ENCODE measurements at regions of chr13 and their contacts with region 1.

Region 1: GRCh38 chr13:24995226-24995804 is 100.6 kb upstream of the PABPC3 start:
- DNase-seq: peak; percentile 70
- H3K4me3 Mint-ChIP-seq: no peak overlapping the region
- H3K27ac Mint-ChIP-seq: no peak overlapping the region
- H3K4me1 Mint-ChIP-seq: peaks cover 5% of the 10 kb centered on the region
- H3K27me3 Mint-ChIP-seq: peaks cover 22% of the 10 kb centered on the region

Region 2: GRCh38 chr13:24683838-24684599 is 311.3 kb before region 1 on chr13:
- CTCF ChIA-PET with region 1: interaction called, 4 read pairs
- POLR2A ChIA-PET with region 1: no interaction called
- intact Hi-C with region 1: loop called (anchors 5 kb)
- DNase-seq: peak; percentile 79
- H3K4me3 Mint-ChIP-seq: peak overlapping the region; percentile 23
- H3K27ac Mint-ChIP-seq: no peak overlapping the region
- H3K4me1 Mint-ChIP-seq: peaks cover 30% of the 10 kb centered on the region
- H3K27me3 Mint-ChIP-seq: peaks cover 34% of the 10 kb centered on the region

Region 3: GRCh38 chr13:24747248-24748060 is 247.9 kb before region 1 on chr13:
- CTCF ChIA-PET with region 1: no interaction called
- POLR2A ChIA-PET with region 1: no interaction called
- intact Hi-C with region 1: loop called (anchors 10 kb)
- DNase-seq: peak; percentile 37
- H3K4me3 Mint-ChIP-seq: peak overlapping the region; percentile 64
- H3K27ac Mint-ChIP-seq: no peak overlapping the region
- H3K4me1 Mint-ChIP-seq: peaks cover 15% of the 10 kb centered on the region
- H3K27me3 Mint-ChIP-seq: peaks cover 46% of the 10 kb centered on the region

Region 4: GRCh38 chr13:24985109-24985508 is 10.2 kb before region 1 on chr13:
- CTCF ChIA-PET with region 1: interaction called, 14 read pairs
- POLR2A ChIA-PET with region 1: no interaction called
- intact Hi-C with region 1: no loop called
- DNase-seq: no peak
- H3K4me3 Mint-ChIP-seq: no peak overlapping the region
- H3K27ac Mint-ChIP-seq: no peak overlapping the region
- H3K4me1 Mint-ChIP-seq: no peaks in the 10 kb centered on the region
- H3K27me3 Mint-ChIP-seq: peaks cover 36% of the 10 kb centered on the region

Region 5: GRCh38 chr13:25037057-25037813 is 41.9 kb after region 1 on chr13:
- CTCF ChIA-PET with region 1: interaction called, 15 read pairs
- POLR2A ChIA-PET with region 1: no interaction called
- intact Hi-C with region 1: loop called (anchors 2 kb)
- DNase-seq: peak; percentile 62
- H3K4me3 Mint-ChIP-seq: no peak overlapping the region
- H3K27ac Mint-ChIP-seq: no peak overlapping the region
- H3K4me1 Mint-ChIP-seq: no peaks in the 10 kb centered on the region
- H3K27me3 Mint-ChIP-seq: peaks cover 33% of the 10 kb centered on the region

Region 6: DNA sequence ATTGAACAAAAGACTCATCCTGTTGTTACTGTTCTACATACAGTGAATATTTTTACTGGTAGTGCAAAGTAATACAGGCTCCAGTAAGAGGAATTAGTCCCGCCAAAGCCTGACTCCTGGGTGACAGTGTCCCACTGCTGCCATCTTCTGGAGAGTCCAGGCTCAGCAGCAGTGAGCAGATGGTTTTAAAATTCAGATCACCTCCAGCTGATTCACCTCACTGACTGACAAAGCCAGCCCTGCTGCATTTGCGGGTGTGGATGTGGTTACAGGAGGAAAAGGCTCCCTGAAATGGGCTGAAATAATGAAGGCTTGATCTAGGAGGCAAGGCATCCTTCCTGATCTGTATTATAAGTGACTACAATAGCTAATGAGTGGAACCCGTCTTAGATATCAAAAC is 118.9 kb after region 1 on chr13:
- CTCF ChIA-PET with region 1: interaction called, 13 read pairs
- POLR2A ChIA-PET with region 1: no interaction called
- intact Hi-C with region 1: no loop called
- DNase-seq: peak; percentile 79
- H3K4me3 Mint-ChIP-seq: no peak overlapping the region
- H3K27ac Mint-ChIP-seq: no peak overlapping the region
- H3K4me1 Mint-ChIP-seq: no peaks in the 10 kb centered on the region
- H3K27me3 Mint-ChIP-seq: peaks cover 19% of the 10 kb centered on the region